Common myeloid progenitor, CD34-positive (primary cell): ENCODE measurements at regions of chr2 and their contacts with region 1.

Region 1: DNA sequence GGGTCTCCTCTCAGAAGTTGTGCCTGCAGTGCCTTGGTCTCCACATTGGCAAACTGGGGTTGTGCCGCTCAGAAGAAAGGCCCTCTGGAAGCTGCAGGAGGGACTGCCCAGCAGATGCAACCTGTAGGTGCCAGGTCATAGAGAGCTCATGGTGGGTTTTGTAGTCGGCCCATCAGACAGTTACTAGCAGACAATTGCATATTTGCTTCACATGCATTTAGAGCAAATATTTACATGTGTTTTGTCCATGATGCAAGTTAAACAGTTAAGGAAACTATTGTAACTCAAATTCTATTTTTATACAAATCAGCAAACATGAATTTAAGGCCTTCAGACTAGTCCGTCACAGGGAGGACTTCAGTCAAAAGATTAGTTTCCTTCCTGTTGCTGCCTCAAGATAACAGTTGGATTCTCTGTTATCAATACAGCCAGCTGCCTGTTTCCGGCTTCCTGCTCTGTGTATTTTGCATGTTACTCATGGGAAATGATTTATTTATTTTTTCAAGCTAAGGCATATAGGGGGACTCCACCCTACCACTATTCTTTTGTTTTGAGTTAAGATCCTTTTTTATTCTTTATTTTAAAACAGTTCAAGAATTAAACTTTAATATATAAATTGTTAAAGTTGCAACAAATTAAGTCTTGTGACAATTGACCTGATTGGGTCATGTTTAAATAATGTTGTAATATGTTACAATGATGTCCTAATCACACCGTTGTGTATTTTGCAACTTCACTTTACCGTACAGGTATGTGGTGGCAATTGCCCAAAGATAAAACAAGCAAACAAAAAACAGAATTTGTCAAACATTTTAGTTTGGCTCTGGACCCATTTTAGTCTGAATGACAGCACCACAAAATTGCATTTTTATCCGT is 133.5 kb downstream of the SPTBN1 start:
- DNase-seq: peak; percentile 97 to 99 (median 98)
- H3K4me3 ChIP-seq: peak overlapping the region in 6 of 7 experiments; percentile 4 to 67 (median 49)
- H3K27ac ChIP-seq: peak overlapping the region; percentile 87 to 95
- H3K4me1 ChIP-seq: peaks cover 71 to 96% (median 83%) of the 10 kb centered on the region in 4 experiments
- H3K27me3 ChIP-seq: no peaks in the 10 kb centered on the region

Region 2: DNA sequence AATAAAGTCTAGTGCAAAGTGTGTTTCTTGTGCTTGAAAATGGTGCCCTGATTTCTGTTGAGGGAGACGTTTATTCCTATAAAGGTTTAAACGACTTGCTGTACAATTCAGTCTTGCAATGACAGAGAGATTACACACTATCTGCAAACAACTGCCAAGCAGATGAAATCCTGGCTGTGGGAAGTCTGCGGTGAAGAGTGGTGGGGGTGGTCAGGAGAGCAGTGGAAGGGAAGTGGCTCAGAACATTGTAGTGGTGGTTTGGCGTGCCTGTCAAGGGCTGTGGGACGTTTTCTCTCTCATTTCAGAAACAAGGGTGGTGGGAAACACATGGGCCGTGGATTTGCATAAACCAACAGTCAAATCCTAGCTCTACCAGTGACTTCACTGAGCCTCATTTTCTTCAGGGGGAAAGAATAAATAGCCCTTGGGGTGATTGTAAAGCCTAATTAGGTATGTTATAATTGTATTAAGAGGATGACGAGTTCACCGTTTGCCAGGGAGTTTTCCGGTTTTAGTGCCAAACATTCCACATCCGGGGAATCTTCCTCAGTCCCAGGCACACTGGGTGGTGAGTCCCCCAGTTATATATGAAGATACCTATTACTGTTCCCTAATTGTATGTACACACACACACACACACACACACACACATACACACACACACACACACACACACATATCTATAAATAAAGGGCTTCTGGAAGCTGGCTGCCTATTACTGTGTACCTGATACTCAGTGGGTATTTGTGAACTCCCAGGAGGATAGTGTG is 18.5 kb before region 1 on chr2:
- CTCF ChIA-PET with region 1: interaction called, 17 read pairs
- POLR2A ChIA-PET with region 1: interaction called, 13 read pairs
- DNase-seq: peak; percentile 87 to 98 (median 97)
- H3K4me3 ChIP-seq: peak overlapping the region in 5 of 7 experiments; percentile 20 to 62 (median 38)
- H3K27ac ChIP-seq: peak overlapping the region; percentile 26 to 72
- H3K4me1 ChIP-seq: peaks cover 52 to 87% (median 74%) of the 10 kb centered on the region in 4 experiments
- H3K27me3 ChIP-seq: no peaks in the 10 kb centered on the region

Region 3: GRCh38 chr2:54606393-54606969 is 16.9 kb after region 1 on chr2:
- CTCF ChIA-PET with region 1: interaction called, 29 read pairs
- POLR2A ChIA-PET with region 1: interaction called, 7 read pairs
- DNase-seq: no peak
- H3K4me3 ChIP-seq: peak overlapping the region in 1 of 7 experiments; percentile 34
- H3K27ac ChIP-seq: peak overlapping the region; percentile 1 to 75
- H3K4me1 ChIP-seq: peaks cover 46 to 68% (median 55%) of the 10 kb centered on the region in 4 experiments
- H3K27me3 ChIP-seq: no peaks in the 10 kb centered on the region